CD14-positive monocyte (primary cell): ENCODE measurements at regions of chr1 and their contacts with region 1.

Region 1: DNA sequence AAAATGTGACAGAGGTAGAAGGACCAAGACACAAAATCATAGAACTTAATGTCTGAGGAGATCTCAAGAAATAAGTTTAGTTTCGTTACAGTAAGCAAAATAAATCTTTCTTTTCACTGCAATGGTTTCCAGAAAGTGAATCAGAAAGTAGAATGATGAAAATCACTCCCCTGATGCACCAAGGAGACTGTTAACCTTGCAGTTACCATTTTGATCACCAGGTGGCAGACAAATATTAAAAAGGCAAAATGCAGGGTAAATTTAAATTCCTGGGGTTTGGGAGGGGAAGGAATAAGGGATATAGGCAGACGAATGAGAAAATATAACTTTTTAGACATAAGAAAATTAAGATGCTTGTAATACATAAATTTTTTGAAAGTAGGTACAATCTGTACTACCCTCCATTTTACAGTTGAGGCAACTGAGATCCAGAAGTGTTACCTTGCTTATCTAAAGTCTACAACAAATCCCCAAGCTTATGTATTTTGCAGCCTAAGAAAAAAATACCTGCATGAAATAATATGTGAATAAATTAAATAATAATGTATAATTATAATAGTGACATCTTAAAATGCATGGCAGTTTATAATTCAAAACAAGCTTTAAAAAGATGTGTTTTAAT is 253.2 kb downstream of the CRB1 start:
- DNase-seq: peak; percentile 5 to 20 (median 11)
- H3K4me3 ChIP-seq: no peak overlapping the region
- H3K4me3 Mint-ChIP-seq: no peak overlapping the region
- H3K27ac ChIP-seq: no peak overlapping the region
- H3K27ac Mint-ChIP-seq: no peak overlapping the region
- H3K4me1 ChIP-seq: no peaks in the 10 kb centered on the region
- H3K4me1 Mint-ChIP-seq: no peaks in the 10 kb centered on the region
- H3K27me3 ChIP-seq: no peaks in the 10 kb centered on the region
- H3K27me3 Mint-ChIP-seq: no peaks in the 10 kb centered on the region
- CTCF ChIP-seq: peak; percentile 78

Region 2: DNA sequence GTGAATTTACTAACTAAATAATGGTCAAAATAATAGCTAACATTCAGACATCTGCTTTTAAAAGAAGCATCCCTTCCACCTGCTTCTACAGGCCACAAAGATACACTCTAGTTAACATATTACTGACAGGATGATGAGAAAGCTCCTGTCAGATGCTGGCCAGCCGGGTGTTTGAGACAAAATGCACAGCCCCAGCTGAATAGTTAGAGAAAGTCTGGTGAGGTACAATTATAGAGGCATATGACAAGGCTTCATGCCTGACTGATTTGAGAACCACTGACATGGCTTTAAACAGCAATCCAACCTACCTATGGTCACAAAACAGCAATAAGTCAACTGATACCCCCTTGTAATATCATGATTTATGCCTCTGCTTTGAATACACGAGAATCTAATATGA is 117.1 kb after region 1 on chr1:
- intact Hi-C with region 1: no loop called
- DNase-seq: no peak
- H3K4me3 ChIP-seq: no peak overlapping the region
- H3K4me3 Mint-ChIP-seq: no peak overlapping the region
- H3K27ac ChIP-seq: no peak overlapping the region
- H3K27ac Mint-ChIP-seq: no peak overlapping the region
- H3K4me1 ChIP-seq: no peaks in the 10 kb centered on the region
- H3K4me1 Mint-ChIP-seq: no peaks in the 10 kb centered on the region
- H3K27me3 ChIP-seq: no peaks in the 10 kb centered on the region
- H3K27me3 Mint-ChIP-seq: peaks cover 0 to 2% (median 0%) of the 10 kb centered on the region in 3 donors
- CTCF ChIP-seq: no peak

Region 3: GRCh38 chr1:197924516-197925123 is 403.4 kb after region 1 on chr1:
- intact Hi-C with region 1: loop called (anchors 5 kb)
- DNase-seq: peak in 2 of 3 donors; percentile 56
- H3K4me3 ChIP-seq: no peak overlapping the region
- H3K4me3 Mint-ChIP-seq: no peak overlapping the region
- H3K27ac ChIP-seq: no peak overlapping the region
- H3K27ac Mint-ChIP-seq: no peak overlapping the region
- H3K4me1 ChIP-seq: peaks cover 8 to 21% of the 10 kb centered on the region in 2 donors
- H3K4me1 Mint-ChIP-seq: peaks cover 29% of the 10 kb centered on the region
- H3K27me3 ChIP-seq: peaks cover 80 to 89% of the 10 kb centered on the region in 2 donors
- H3K27me3 Mint-ChIP-seq: peaks cover 74 to 81% (median 79%) of the 10 kb centered on the region in 3 donors
- CTCF ChIP-seq: peak; percentile 84

Region 4: GRCh38 chr1:198465201-198466144 is 944.2 kb after region 1 on chr1:
- intact Hi-C with region 1: loop called in 1 of 2 experiments (anchors 5 kb)
- DNase-seq: peak; percentile 1 to 34 (median 11)
- H3K4me3 ChIP-seq: no peak overlapping the region
- H3K4me3 Mint-ChIP-seq: no peak overlapping the region
- H3K27ac ChIP-seq: no peak overlapping the region
- H3K27ac Mint-ChIP-seq: no peak overlapping the region
- H3K4me1 ChIP-seq: no peaks in the 10 kb centered on the region
- H3K4me1 Mint-ChIP-seq: no peaks in the 10 kb centered on the region
- H3K27me3 ChIP-seq: no peaks in the 10 kb centered on the region
- H3K27me3 Mint-ChIP-seq: no peaks in the 10 kb centered on the region
- CTCF ChIP-seq: peak; percentile 76